Activated naive CD4-positive, alpha-beta T cell treated with anti-CD3 and anti-CD28 coated beads, Interleukin-2, amount 10 ng/mL, durations not matched to agents 7 days and 5 days (primary cell): ENCODE measurements at regions of chr7 and their contacts with region 1.

Region 1: DNA sequence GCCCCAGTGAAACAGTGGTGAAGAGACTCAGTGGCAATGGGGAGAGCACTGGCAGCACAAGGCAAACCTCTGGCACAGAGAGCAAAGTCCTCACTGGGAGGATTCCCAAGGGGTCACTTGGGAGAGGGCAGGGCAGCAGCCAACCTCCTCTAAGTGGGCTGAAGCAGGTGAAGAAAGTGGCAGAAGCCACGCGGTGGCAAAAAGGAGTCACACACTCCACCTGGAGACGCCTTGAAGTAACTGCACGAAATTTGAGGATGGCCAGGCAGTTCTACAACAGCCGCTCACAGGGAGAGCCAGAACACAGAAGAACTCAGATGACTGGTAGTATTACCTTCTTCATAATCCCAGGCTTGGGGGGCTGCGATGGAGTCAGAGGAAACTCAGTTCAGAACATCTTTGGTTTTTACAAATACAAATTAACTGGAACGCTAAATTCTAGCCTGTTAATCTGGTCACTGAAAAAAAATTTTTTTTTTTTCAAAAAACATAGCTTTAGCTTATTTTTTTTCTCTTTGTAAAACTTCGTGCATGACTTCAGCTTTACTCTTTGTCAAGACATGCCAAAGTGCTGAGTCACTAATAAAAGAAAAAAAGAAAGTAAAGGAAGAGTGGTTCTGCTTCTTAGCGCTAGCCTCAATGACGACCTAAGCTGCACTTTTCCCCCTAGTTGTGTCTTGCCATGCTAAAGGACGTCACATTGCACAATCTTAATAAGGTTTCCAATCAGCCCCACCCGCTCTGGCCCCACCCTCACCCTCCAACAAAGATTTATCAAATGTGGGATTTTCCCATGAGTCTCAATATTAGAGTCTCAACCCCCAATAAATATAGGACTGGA is 435 bp upstream of the IL6 start:
- DNase-seq: peak; percentile 76
- H3K4me3 Mint-ChIP-seq: peak overlapping the region; percentile 77
- H3K27ac Mint-ChIP-seq: peak overlapping the region; percentile 88
- H3K4me1 Mint-ChIP-seq: peaks cover 68% of the 10 kb centered on the region
- H3K27me3 Mint-ChIP-seq: peaks cover 38% of the 10 kb centered on the region

Region 2: DNA sequence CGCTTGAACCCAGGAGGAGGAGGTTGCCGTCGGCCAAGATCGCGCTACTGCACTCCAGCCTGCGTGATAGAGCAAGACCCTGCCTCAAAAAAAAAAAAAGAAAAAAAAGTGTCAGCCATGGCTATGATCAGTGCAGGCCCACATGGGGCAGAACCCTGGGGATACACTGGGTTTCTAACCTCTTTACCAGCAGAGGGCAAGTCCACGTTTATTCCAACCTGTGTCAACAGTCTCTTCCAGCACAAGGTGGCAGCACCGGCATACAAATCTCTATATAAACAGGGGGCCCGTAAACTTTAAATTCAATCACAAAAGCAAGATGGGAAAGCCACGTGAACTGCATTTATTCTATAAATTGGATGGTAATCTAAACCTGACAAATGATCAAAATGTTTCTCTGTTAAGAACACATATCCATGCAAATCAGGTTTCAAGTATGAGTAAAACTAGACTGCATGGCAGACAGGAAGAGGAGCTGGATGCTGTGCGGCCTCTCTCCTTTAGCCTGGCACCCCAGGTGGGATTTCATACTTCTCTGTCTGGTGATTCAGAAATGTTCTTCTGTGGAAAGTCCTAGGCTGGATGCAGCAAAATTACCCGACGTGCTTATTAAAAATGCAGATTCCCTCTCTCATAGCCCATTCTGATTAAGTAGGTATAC is 166.6 kb before region 1 on chr7:
- CTCF ChIA-PET with region 1: interaction called, 443 read pairs
- DNase-seq: peak; percentile 85
- H3K4me3 Mint-ChIP-seq: no peak overlapping the region
- H3K27ac Mint-ChIP-seq: no peak overlapping the region
- H3K4me1 Mint-ChIP-seq: peaks cover 48% of the 10 kb centered on the region
- H3K27me3 Mint-ChIP-seq: peaks cover 21% of the 10 kb centered on the region

Region 3: DNA sequence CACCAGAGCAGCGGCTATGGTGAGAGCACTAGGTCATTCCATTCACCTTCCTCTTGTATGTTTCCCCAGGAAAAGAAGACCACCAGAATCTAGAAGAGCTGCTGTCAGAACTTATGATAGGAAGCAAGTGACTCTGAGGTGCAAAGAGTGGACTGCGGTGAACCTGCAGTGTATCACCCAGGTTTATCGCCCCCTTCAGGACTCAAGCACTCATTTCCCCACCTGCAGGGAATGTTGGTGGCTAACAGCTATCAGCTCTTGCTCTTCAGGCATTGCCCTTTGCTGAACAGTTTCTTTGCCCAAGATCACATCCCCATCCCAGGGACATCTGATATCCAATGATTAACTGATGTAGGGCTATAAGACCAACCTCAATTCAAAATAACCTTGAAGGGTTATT is 65.8 kb before region 1 on chr7:
- CTCF ChIA-PET with region 1: interaction called, 33 read pairs
- DNase-seq: no peak
- H3K4me3 Mint-ChIP-seq: no peak overlapping the region
- H3K27ac Mint-ChIP-seq: no peak overlapping the region
- H3K4me1 Mint-ChIP-seq: peaks cover 54% of the 10 kb centered on the region
- H3K27me3 Mint-ChIP-seq: peaks cover 9% of the 10 kb centered on the region

Region 4: DNA sequence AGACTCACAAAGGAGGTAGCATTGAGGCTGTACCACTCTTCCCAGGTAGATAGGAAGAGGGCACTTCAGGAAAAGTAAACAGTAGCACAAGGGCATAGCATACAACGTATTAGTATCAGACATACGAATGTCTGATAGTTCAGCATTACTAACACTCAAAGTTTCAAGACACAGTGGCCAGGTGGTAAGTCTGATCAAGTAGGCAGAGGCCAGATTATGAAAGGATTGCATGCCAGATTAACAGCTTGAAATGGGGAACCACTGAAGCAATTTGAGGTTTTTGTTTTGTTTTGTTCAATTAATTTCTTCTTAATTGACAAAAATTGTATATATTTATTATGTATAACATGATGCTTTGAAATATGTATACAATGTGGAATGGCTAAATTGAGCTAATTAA is 45.3 kb before region 1 on chr7:
- CTCF ChIA-PET with region 1: interaction called, 11 read pairs
- DNase-seq: no peak
- H3K4me3 Mint-ChIP-seq: peak overlapping the region; percentile 11
- H3K27ac Mint-ChIP-seq: peak overlapping the region; percentile 93
- H3K4me1 Mint-ChIP-seq: peaks cover 77% of the 10 kb centered on the region
- H3K27me3 Mint-ChIP-seq: peaks cover 19% of the 10 kb centered on the region

Region 5: DNA sequence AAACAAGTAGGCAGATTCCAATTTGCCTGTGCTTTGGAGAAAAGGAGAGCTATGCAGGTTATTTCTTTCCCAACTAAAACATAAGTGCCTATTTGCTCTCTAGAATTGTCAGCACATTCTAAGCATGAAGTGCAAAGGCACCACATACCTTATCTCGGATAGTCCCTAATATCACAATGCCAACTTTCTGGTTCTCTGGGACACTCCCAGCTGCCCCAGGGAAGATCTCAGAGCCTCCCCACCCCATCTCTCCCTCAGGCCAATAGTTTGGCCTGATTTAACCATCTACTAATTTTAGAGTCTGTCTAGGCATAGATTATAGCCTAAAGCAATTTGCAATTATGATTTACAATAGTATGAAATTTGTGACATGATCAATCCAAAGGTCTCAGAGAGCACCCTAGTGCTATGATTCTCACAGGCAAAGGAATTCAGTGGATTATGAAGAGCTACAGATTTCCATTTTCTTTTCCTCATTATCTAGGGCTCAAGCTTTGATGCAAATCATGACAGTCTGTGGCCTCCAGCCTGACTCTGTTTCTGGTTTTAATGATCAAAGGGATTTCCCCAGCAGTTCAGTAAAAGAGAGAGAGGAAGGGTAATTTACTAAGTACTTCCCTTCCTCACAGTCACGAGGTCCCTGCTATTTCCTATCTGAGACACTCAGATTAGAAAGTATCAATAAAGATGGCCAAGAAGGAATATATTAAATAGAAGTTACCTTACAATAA is 28.5 kb before region 1 on chr7:
- CTCF ChIA-PET with region 1: interaction called, 13 read pairs
- DNase-seq: peak; percentile 38
- H3K4me3 Mint-ChIP-seq: no peak overlapping the region
- H3K27ac Mint-ChIP-seq: peak overlapping the region; percentile 7
- H3K4me1 Mint-ChIP-seq: peaks cover 73% of the 10 kb centered on the region
- H3K27me3 Mint-ChIP-seq: peaks cover 18% of the 10 kb centered on the region

Region 6: GRCh38 chr7:22782616-22783232 is 56.2 kb after region 1 on chr7:
- CTCF ChIA-PET with region 1: interaction called, 11 read pairs
- DNase-seq: peak; percentile 88
- H3K4me3 Mint-ChIP-seq: no peak overlapping the region
- H3K27ac Mint-ChIP-seq: no peak overlapping the region
- H3K4me1 Mint-ChIP-seq: no peaks in the 10 kb centered on the region
- H3K27me3 Mint-ChIP-seq: peaks cover 19% of the 10 kb centered on the region

Region 7: GRCh38 chr7:22992874-22993840 is 266.6 kb after region 1 on chr7:
- CTCF ChIA-PET with region 1: no interaction called
- DNase-seq: peak; percentile 26
- H3K4me3 Mint-ChIP-seq: no peak overlapping the region
- H3K27ac Mint-ChIP-seq: no peak overlapping the region
- H3K4me1 Mint-ChIP-seq: peaks cover 36% of the 10 kb centered on the region
- H3K27me3 Mint-ChIP-seq: no peaks in the 10 kb centered on the region